ENCODE measurements at regions of chr11 and their contacts with region 1.

Region 1: GRCh38 chr11:8006349-8006977 is 19.3 kb downstream of the EIF3F start:
- DNase-seq: peak; percentile 59
- H3K4me3 Mint-ChIP-seq: no peak overlapping the region
- H3K27ac Mint-ChIP-seq: no peak overlapping the region
- H3K4me1 Mint-ChIP-seq: peaks cover 5% of the 10 kb centered on the region
- H3K27me3 Mint-ChIP-seq: peaks cover 1% of the 10 kb centered on the region

Region 2: DNA sequence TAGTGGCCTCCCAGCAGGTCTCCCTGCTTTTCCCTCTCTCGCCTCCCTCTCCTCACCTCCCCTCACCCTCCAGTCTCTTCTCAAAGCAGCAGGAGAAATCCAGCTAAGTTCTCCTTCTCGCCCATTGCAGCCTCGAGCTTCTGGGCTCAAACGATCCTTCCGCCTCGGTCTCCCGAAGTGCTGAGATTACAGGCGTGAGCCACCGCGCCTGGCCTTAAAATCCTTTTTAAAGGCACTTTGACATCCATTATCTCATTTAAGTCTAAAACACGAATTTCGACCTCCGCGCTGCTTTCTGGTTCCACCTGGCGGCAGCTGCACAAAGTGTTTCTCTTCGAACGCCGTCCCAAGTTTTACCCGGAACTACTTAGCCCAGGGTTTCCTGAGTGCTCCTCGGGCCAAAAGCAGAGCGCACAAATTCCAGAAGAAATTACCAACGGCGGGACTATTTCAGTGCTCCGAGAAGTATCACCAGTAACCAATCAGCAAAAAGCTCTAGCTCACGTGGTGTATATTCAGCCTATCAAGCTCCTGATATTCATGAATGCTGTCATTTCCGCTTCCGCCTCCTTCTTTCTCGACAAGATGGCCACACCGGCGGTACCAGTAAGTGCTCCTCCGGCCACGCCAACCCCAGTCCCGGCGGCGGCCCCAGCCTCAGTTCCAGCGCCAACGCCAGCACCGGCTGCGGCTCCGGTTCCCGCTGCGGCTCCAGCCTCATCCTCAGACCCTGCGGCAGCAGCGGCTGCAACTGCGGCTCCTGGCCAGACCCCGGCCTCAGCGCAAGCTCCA is 19.5 kb before region 1 on chr11 and contains the start of gene EIF3F:
- CTCF ChIA-PET with region 1: interaction called, 19 read pairs
- POLR2A ChIA-PET with region 1: interaction called, 3 read pairs
- intact Hi-C with region 1: no loop called
- DNase-seq: peak; percentile 93
- H3K4me3 Mint-ChIP-seq: peak within 1 kb of the TSS; percentile 93
- H3K27ac Mint-ChIP-seq: peak within 1 kb of the TSS; percentile 91
- H3K4me1 Mint-ChIP-seq: peaks cover 40% of the 10 kb centered on the region
- H3K27me3 Mint-ChIP-seq: no peaks in the 10 kb centered on the region
- total RNA-seq, gene EIF3F: 309 to 319 TPM

Region 3: DNA sequence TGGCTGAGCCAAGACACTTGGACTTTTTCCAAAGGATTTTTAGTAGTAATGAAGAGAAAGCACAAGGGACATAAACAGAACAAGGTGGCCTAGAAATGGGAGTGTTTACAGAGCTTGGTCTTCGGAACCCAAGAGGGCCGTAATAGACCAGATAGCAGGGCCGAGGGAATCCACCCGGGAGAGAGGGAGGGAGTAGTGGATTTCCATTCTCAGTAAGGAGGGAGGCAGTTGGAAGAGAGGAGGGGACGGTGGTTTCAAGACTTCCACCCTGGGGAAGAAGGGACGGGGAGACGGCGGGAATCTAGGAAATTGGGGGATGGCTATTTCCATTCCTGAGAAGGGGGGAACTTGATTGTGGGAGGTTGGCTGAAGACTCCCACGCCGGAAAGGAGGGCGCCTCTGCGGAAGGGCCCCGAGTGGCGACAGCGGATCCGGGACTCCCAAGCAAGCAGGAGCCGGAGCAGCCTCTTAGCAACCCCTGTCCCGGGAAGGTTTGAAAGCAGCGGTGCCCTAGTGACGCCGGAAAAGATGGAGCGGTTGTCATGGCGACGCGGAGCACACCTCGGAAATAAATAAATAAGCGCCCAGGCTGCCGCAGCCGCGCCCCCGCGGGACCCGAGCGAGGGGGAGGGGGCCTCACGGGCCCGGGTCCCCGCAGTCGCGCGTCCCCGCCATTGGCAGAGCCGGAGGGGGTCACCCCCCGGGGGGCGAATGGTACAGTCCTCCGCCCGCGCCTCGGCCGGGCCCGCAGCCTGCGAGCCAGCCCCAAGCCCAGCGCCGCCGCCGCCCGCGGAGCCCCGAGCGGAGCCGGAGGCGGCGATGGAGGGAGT is 12.2 kb after region 1 on chr11:
- CTCF ChIA-PET with region 1: interaction called, 44 read pairs
- POLR2A ChIA-PET with region 1: no interaction called
- intact Hi-C with region 1: no loop called
- DNase-seq: peak; percentile 78
- H3K4me3 Mint-ChIP-seq: peak overlapping the region; percentile 62
- H3K27ac Mint-ChIP-seq: no peak overlapping the region
- H3K4me1 Mint-ChIP-seq: peaks cover 12% of the 10 kb centered on the region
- H3K27me3 Mint-ChIP-seq: peaks cover 22% of the 10 kb centered on the region

Region 4: GRCh38 chr11:8023831-8024555 is 17.5 kb after region 1 on chr11:
- CTCF ChIA-PET with region 1: interaction called, 44 read pairs
- POLR2A ChIA-PET with region 1: no interaction called
- intact Hi-C with region 1: no loop called
- DNase-seq: no peak
- H3K4me3 Mint-ChIP-seq: no peak overlapping the region
- H3K27ac Mint-ChIP-seq: no peak overlapping the region
- H3K4me1 Mint-ChIP-seq: peaks cover 8% of the 10 kb centered on the region
- H3K27me3 Mint-ChIP-seq: peaks cover 13% of the 10 kb centered on the region

Region 5: DNA sequence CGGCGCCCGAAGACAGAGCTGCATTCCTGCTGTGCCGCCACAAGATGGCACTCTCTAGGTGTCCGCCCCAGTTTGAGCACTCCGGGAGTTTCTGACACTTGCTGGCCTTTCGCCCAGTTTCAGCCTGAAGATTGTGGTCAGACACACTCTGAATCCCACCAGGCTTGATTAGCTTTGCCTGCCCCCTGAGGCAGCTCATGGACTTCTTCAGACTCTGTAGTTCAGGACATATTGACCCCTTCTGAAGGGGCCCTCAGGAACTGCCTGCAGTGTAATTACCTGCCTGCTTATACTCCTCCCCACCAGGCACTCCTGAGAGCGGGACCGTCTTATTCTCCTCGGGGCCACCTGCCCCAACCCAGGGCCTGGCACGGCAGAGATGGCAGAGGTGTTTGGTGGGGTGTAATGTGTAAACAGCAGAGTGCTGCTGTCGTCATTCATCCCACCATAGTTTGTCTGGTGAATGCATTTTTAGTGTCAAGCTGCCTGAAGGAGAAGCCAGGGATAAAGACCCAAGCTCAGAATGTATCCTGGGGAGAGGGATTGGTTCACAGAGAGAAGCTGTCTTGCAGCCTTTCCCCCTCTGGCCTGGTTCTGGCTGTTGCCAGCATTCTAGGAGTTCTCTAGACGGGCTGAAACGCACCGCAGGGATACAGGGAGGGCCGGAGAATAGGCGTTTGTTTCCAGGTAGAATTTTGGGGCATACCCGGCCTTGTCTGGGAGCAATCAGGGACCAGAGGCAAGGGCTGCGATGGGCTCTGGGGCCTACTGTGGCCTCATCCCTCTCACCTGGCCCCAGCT is 27.0 kb after region 1 on chr11:
- CTCF ChIA-PET with region 1: interaction called, 33 read pairs
- POLR2A ChIA-PET with region 1: no interaction called
- intact Hi-C with region 1: loop called (anchors 2 kb)
- DNase-seq: peak; percentile 63
- H3K4me3 Mint-ChIP-seq: no peak overlapping the region
- H3K27ac Mint-ChIP-seq: no peak overlapping the region
- H3K4me1 Mint-ChIP-seq: peaks cover 7% of the 10 kb centered on the region
- H3K27me3 Mint-ChIP-seq: peaks cover 12% of the 10 kb centered on the region

Region 6: GRCh38 chr11:8071616-8072581 is 65.4 kb after region 1 on chr11:
- CTCF ChIA-PET with region 1: interaction called, 12 read pairs
- POLR2A ChIA-PET with region 1: no interaction called
- intact Hi-C with region 1: no loop called
- DNase-seq: no peak
- H3K4me3 Mint-ChIP-seq: no peak overlapping the region
- H3K27ac Mint-ChIP-seq: no peak overlapping the region
- H3K4me1 Mint-ChIP-seq: peaks cover 8% of the 10 kb centered on the region
- H3K27me3 Mint-ChIP-seq: peaks cover 10% of the 10 kb centered on the region

Region 7: DNA sequence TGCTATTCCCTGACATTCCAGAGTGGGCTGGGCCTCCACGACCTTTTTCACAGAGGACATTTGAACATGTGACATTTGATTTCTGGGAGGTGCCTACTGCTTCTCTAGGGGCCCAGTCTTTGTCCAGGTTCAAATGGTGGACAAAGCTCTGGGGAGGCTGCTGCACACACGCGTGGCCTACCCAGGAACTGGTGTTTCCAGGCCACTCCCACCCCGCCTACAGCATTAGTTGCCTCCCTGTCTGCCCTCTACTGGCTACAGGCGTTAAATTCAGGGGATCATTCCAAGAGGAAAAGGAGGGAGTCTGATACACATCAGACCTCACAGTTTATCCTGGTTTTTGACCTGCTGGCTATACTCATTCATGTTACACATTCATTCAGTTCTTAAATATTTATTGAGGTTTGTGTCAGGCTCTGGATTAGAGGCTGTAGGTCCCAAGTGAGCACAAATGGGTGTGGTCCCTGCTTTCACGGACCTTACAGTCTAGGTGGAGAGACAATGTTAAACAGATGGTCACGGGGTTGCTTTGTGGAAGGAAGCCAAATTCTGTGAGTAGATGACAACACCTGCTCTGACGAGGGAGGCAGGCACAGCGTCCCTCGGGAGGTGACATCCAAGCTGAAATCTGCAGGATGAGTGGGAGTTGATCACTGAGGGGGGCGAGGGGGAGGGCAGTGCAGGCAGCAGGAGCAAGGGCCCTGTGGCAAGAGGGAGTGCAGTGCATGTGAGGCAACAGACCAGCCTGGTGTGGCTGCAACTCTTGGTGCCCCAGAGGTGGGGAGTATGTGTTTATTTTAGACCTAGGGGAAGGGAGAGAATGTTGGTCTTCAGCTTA is 86.3 kb after region 1 on chr11:
- CTCF ChIA-PET with region 1: interaction called, 437 read pairs
- POLR2A ChIA-PET with region 1: no interaction called
- intact Hi-C with region 1: loop called (anchors 1 kb)
- DNase-seq: peak; percentile 72
- H3K4me3 Mint-ChIP-seq: no peak overlapping the region
- H3K27ac Mint-ChIP-seq: no peak overlapping the region
- H3K4me1 Mint-ChIP-seq: no peaks in the 10 kb centered on the region
- H3K27me3 Mint-ChIP-seq: no peaks in the 10 kb centered on the region

Measured in activated CD4-positive, alpha-beta memory T cell treated with anti-CD3 and anti-CD28 coated beads for 36 hours (primary cell).